Activated CD4-positive, alpha-beta T cell treated with anti-CD3 and anti-CD28 coated beads for 36 hours (primary cell): ENCODE measurements at regions of chr9 and their contacts with region 1.

Region 1: GRCh38 chr9:126722252-126723078 is 82.4 kb upstream of the ZBTB43 start:
- DNase-seq: peak; percentile 96
- ATAC-seq: peak; percentile 73
- H3K4me3 Mint-ChIP-seq: peak overlapping the region; percentile 77
- H3K27ac Mint-ChIP-seq: peak overlapping the region; percentile 89
- H3K4me1 Mint-ChIP-seq: peaks cover 43% of the 10 kb centered on the region
- H3K27me3 Mint-ChIP-seq: no peaks in the 10 kb centered on the region

Region 2: DNA sequence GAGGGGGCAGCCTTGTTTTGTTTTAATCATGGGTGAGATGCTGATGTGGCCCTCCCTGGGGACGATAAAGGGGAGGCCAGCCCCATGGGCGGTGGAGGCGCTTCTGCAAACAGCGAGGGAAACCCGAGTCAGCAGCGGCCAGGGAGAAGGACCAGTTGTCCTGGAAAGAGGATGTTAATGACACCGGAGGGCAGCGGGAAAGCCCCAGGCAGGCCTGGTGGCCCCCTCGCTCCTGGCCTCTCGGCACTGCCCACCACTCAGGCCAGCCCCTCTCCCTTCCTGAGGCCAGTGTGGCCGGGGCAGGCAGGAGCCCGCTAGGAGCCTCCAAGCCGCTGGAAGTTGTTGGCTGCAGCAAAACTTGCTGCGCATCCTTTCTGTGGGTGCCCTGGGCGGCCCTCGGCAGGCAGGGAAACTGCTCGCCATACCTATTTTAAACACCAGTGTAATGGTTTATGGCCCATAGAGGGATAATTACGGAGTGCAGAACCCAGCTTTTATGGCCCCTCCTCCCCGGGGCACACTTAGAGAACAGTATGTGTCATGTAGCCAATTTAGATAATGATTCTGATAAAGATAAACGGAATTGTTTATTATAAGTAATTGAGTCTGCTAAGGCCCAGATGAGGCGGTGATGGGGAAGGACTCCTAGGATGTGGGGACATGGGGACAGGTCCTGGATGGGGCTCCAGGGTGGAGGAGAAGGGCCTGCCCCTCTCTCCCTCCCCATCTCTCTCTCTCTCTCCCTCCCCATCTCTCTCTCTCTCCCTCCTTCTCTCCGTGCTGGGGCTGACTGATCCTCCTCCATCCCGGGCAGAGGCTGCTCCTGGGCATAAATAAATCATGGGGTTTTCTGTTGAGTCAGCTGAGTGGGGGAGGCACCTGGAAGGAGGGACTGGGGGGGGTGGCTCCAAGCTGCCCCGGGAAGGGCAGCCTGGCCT is 71.8 kb before region 1 on chr9:
- CTCF ChIA-PET with region 1: no interaction called
- POLR2A ChIA-PET with region 1: no interaction called
- intact Hi-C with region 1: no loop called
- DNase-seq: no peak
- ATAC-seq: no peak
- H3K4me3 Mint-ChIP-seq: no peak overlapping the region
- H3K27ac Mint-ChIP-seq: no peak overlapping the region
- H3K4me1 Mint-ChIP-seq: no peaks in the 10 kb centered on the region
- H3K27me3 Mint-ChIP-seq: peaks cover 63% of the 10 kb centered on the region

Region 3: GRCh38 chr9:126860077-126860756 is 137.8 kb after region 1 on chr9 and contains the start of gene ZBTB34:
- CTCF ChIA-PET with region 1: interaction called, 3 read pairs
- POLR2A ChIA-PET with region 1: no interaction called
- intact Hi-C with region 1: loop called in 1 of 2 experiments (anchors 2 kb)
- DNase-seq: peak; percentile 84
- ATAC-seq: peak; percentile 83
- H3K4me3 Mint-ChIP-seq: peak within 1 kb of the TSS; percentile 74
- H3K27ac Mint-ChIP-seq: peak within 1 kb of the TSS; percentile 81
- H3K4me1 Mint-ChIP-seq: peaks cover 19% of the 10 kb centered on the region
- H3K27me3 Mint-ChIP-seq: no peaks in the 10 kb centered on the region
- total RNA-seq, gene ZBTB34: 4.2 to 5.0 TPM